ENCODE measurements at regions of chr20 and their contacts with region 1.

Region 1: DNA sequence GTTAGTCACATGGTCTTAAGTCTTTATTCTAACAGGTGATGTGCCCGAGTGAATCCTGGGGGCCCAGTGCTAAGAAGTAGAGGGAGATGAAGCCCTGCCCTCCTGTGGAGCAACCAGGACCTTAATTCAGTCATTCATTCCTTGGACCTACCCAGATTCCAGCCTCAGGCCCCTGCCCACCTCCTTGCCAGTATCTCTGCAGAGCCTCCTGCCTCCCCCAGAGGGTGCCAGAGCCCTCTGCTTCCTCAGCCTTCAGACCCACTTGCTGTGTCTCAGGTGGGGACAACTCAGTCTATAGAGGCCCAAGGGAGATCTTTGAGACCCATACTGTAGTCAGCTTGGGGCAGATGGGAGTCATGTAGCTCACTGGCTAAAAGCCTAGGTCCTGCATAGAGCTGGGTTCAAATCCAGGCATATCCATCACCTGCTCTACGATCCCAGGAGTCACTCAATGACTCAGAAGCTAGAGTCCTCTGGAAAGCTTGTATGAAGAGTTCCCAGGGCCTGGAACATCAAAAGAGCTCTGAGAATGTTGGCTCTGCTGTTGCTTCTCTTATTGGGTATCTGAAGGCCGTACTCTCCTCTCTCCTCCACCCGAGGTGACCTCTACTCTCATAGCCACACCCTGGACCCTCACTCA is 3.9 kb upstream of the SIGLEC1 start:
- DNase-seq: no peak
- H3K4me3 ChIP-seq: no peak overlapping the region
- H3K27ac ChIP-seq: no peak overlapping the region
- H3K4me1 ChIP-seq: no peaks in the 10 kb centered on the region
- H3K27me3 ChIP-seq: no peaks in the 10 kb centered on the region
- CTCF ChIP-seq: peak in 3 of 4 experiments; percentile 42 to 56 (median 44)
- POLR2A ChIP-seq: no peak

Region 2: GRCh38 chr20:3658716-3659491 is 57.4 kb before region 1 on chr20:
- intact Hi-C with region 1: no loop called
- DNase-seq: no peak
- H3K4me3 ChIP-seq: no peak overlapping the region
- H3K27ac ChIP-seq: no peak overlapping the region
- H3K4me1 ChIP-seq: no peaks in the 10 kb centered on the region
- H3K27me3 ChIP-seq: peaks cover 20% of the 10 kb centered on the region
- CTCF ChIP-seq: no peak
- POLR2A ChIP-seq: no peak

Region 3: GRCh38 chr20:3777716-3778629 is 61.7 kb after region 1 on chr20:
- intact Hi-C with region 1: loop called (anchors 5 kb)
- DNase-seq: no peak
- H3K4me3 ChIP-seq: peak overlapping the region; percentile 27 to 35
- H3K27ac ChIP-seq: no peak overlapping the region
- H3K4me1 ChIP-seq: peaks cover 4% of the 10 kb centered on the region
- H3K27me3 ChIP-seq: no peaks in the 10 kb centered on the region
- CTCF ChIP-seq: peak in 1 of 4 experiments; percentile 28
- POLR2A ChIP-seq: no peak

Measured in prostate gland (tissue), 2 donors.